OCI-LY7 (cell line): ENCODE measurements at regions of chr2 and their contacts with region 1.

Region 1: GRCh38 chr2:3545788-3546478 is 12.2 kb downstream of the RNASEH1 start:
- DNase-seq: no peak
- H3K4me3 ChIP-seq: no peak overlapping the region
- H3K27ac ChIP-seq: no peak overlapping the region
- H3K4me1 ChIP-seq: no peaks in the 10 kb centered on the region
- CTCF ChIP-seq: no peak

Region 2: DNA sequence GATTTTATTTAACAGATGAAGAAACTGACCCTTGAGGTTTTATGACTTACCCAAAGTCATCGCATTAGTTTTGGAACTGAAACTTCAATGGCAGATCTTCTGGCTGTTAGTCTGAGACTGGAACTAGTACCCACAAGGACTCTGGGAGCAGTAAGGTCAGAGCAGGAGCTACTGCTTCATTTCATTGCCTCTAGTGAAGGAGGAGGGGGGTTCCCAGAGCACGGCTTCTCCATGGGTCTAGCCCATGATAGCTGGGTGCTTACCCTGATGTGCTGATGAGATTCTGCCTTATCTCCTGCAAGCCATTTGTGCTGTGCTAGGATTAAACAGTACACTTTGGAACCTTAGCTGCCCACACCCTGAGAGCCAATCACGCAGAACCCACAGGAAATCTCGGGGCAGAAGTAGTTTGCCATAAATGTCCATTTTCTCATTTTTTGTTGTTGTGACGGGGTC is 17.6 kb after region 1 on chr2:
- CTCF ChIA-PET with region 1: no interaction called
- POLR2A ChIA-PET with region 1: interaction called, 12 read pairs
- intact Hi-C with region 1: no loop called
- DNase-seq: peak; percentile 22
- H3K4me3 ChIP-seq: peak overlapping the region; percentile 20
- H3K27ac ChIP-seq: peak overlapping the region; percentile 71
- H3K4me1 ChIP-seq: peaks cover 47% of the 10 kb centered on the region
- CTCF ChIP-seq: no peak

Region 3: GRCh38 chr2:4725618-4726017 is 1179.7 kb after region 1 on chr2:
- CTCF ChIA-PET with region 1: no interaction called
- POLR2A ChIA-PET with region 1: no interaction called
- intact Hi-C with region 1: no loop called
- DNase-seq: no peak
- H3K4me3 ChIP-seq: no peak overlapping the region
- H3K27ac ChIP-seq: no peak overlapping the region
- H3K4me1 ChIP-seq: no peaks in the 10 kb centered on the region
- CTCF ChIP-seq: no peak